PC-9 (cell line): ENCODE measurements at regions of chr11 and their contacts with region 1.

Region 1: GRCh38 chr11:46392421-46393230 is 1.1 kb upstream of the CHRM4 start:
- DNase-seq: peak; percentile 66 to 86
- H3K4me3 ChIP-seq: no peak overlapping the region
- H3K27ac ChIP-seq: no peak overlapping the region
- H3K4me1 ChIP-seq: 0 out of 2 replicates have a peak, but pooled peaks cover 4% of the 10 kb centered on the region
- H3K27me3 ChIP-seq: peaks cover 22% of the 10 kb centered on the region
- CTCF ChIP-seq: no peak

Region 2: GRCh38 chr11:46380340-46381047 is 12.1 kb before region 1 on chr11:
- CTCF ChIA-PET with region 1: interaction called, 10 read pairs
- POLR2A ChIA-PET with region 1: no interaction called
- intact Hi-C with region 1: no loop called
- DNase-seq: peak; percentile 33 to 80
- H3K4me3 ChIP-seq: peak overlapping the region; percentile 73
- H3K27ac ChIP-seq: peak overlapping the region; percentile 5; the same call in 1 of the 2 replicates
- H3K4me1 ChIP-seq: peaks cover 21% of the 10 kb centered on the region
- H3K27me3 ChIP-seq: no peaks in the 10 kb centered on the region
- CTCF ChIP-seq: no peak

Region 3: GRCh38 chr11:46537537-46538295 is 145.1 kb after region 1 on chr11:
- CTCF ChIA-PET with region 1: no interaction called
- POLR2A ChIA-PET with region 1: no interaction called
- intact Hi-C with region 1: loop called (anchors 1 kb)
- DNase-seq: peak; percentile 66 to 76
- H3K4me3 ChIP-seq: no peak overlapping the region
- H3K27ac ChIP-seq: 0 out of 2 replicates have a peak overlapping the region, but pooled peaks have one; percentile 5
- H3K4me1 ChIP-seq: peaks cover 8% of the 10 kb centered on the region; the same call in 1 of the 2 replicates
- H3K27me3 ChIP-seq: no peaks in the 10 kb centered on the region
- CTCF ChIP-seq: peak; percentile 97